Dendritic cell treated with granulocyte-macrophage colony-stimulating factor and Interleukin-4, amounts not matched to agents 40 ng/mL and 50 ng/mL, for 4 days (primary cell): ENCODE measurements at regions of chr15 and their contacts with region 1.

Region 1: DNA sequence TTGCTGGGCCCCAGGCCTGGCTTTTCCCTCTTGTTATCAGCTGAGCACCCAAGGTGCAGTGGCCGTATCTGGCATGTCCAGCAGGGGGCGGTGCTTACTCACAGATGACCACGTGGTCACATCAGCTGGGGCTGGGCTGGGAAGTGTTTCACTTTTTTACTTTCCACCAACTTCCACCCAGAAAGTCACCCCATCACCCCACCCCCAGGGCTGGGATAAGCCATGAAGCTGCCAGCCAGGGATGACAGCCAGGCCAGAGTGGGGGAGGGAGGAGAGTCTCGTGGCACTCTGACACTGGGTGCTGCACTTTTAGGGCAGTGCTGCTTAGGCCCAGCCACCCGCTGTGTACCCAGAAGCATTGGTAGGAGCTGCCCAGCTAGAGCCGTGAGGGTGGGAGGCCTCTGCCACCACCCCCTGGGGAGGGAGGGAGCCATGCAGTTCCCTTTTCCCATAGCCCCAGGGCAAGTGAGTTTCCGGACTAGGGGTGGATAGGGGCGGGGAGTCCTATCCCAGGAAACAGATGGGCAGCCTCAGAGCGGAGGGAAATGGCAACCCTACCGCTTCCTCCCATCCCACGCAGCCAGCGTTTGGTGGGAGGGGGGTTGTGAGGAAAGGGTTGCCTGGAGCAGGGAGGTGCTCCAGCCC is 6.1 kb downstream of the PPCDC start:
- H3K4me3 Mint-ChIP-seq: peak overlapping the region; percentile 59
- H3K27ac Mint-ChIP-seq: peak overlapping the region; percentile 89
- H3K4me1 Mint-ChIP-seq: peaks cover 96% of the 10 kb centered on the region
- H3K27me3 Mint-ChIP-seq: no peaks in the 10 kb centered on the region

Region 2: GRCh38 chr15:75042730-75043508 is 13.4 kb after region 1 on chr15:
- intact Hi-C with region 1: loop called (anchors 2 kb)
- H3K4me3 Mint-ChIP-seq: peak overlapping the region; percentile 6
- H3K27ac Mint-ChIP-seq: peak overlapping the region; percentile 85
- H3K4me1 Mint-ChIP-seq: peaks cover 97% of the 10 kb centered on the region
- H3K27me3 Mint-ChIP-seq: no peaks in the 10 kb centered on the region